Thyroid gland (tissue), 4 donors: ENCODE measurements at regions of chr2 and their contacts with region 1.

Region 1: DNA sequence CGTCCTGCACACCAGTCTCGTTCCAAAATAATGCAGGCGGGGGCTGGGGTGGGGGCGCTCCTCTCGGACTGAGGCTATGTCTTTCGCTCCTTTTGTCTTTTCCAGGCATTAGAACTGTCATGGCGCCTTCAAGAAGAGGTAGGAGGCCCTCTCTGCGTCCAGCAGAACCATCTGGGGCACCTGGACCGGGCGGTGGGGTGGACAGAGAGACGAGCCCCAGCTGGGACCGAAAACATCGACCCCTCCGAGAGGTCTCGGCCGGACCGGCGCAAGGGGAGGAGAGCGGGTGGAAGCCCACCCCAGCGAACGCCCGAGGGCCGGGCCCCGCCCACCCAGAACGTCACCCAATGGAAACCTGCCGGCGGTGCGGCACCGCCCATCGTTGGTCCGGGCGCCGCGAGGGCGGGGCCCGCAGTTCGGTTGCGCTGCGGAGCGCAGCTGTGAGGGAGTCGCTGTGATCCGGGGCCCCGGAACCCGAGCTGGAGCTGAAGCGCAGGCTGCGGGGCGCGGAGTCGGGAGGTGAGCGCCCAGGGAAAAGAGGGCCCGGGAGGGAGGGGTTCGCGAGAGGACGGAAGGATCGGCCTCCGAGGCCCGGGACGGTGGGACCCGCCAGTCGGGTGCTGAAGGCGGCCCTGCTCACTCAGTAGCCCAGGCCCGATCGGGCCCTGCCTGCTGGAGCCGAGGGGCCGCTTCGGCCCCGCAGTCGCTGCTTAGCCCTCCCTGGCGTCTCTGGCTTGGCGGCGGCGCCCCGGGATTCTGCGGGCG is at the start of gene NRBP1:
- DNase-seq: peak; percentile 94 to 96
- H3K4me3 ChIP-seq: peak within 1 kb of the TSS; percentile 51 to 99 (median 97)
- H3K27ac ChIP-seq: peak within 1 kb of the TSS; percentile 97 to 99 (median 98)
- H3K4me1 ChIP-seq: peaks cover 26 to 27% of the 10 kb centered on the region in 2 donors
- H3K27me3 ChIP-seq: no peaks in the 10 kb centered on the region
- CTCF ChIP-seq: no peak
- POLR2A ChIP-seq: peak; percentile 34 to 91
- total RNA-seq, gene NRBP1: 45.2 to 68.6 (median 63.1) TPM

Region 2: DNA sequence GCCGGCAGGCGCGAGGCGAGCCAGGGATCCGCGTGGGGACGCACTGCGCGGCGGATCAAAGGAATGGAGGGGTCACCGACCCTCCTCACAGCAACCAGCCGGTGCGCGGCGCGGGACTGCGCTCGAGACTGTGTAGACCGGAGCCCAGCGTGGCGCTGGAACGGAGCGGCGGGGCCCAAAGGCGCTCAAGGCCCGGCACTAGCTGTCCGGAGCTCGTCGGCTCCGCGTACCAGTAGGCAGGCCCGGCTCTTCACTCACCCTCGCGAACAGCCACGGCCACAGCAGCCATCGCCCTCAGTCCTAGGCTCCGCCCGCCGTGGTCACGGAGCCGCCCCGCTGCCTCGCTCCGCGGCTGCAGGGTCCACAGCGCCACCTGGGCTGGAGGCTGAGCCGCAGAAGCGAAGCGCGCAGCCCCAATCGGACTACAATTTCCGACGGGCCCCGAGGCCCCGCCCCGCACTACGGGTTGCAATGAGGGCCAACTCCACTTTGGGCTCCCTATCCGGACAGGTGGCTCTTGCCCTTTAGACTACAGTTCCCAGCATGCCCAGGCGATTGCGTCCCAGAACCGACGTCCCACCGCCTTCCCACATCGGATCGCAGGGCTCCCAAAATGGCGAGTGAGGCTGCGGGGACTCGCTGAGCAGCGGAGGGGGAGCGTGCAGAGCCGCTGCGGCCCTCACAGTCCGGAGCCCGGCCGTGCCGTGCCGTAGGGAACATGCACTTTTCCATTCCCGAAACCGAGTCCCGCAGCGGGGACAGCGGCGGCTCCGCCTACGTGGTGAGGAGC is 58.2 kb before region 1 on chr2 and contains the starts of genes EIF2B4 and SNX17:
- intact Hi-C with region 1: no loop called
- DNase-seq: peak; percentile 99 to 100
- H3K4me3 ChIP-seq: peak within 1 kb of the TSS; percentile 81 to 94 (median 86)
- H3K27ac ChIP-seq: peak within 1 kb of the TSS; percentile 75 to 83 (median 82)
- H3K4me1 ChIP-seq: peaks cover 18 to 25% of the 10 kb centered on the region in 2 donors
- H3K27me3 ChIP-seq: no peaks in the 10 kb centered on the region
- CTCF ChIP-seq: peak in 5 of 6 experiments; percentile 31 to 88 (median 81)
- POLR2A ChIP-seq: peak; percentile 47 to 83
- total RNA-seq, gene EIF2B4: 34.7 to 44.0 (median 38.6) TPM
- total RNA-seq, gene SNX17: 109 to 148 (median 130) TPM

Region 3: DNA sequence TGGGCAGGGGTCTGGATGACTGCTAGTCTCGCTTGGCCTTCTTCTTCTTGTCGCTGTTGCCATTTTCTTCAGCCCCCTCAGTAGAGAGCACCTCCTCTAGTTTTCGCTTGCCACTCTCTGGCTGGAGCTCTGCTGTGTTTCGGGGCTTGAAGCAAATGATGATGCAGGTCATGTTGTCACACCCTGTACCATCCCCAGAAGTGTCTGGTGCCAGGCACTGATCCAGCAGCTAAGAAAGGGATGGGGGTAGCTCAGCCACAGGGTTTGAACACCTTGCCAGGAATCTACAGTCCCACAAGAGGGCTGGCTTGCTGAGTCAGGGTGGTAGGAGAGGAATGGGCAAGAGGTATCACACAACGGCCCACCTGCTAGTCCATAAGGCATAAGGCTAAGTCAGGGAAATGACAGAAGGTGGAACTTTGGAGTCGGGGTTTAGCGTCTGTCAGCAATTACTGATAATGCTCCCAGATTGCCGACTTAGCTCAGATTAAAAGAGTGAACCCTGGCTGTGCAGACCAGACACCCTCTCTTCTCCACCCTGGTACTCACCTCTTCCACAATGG is 46.7 kb before region 1 on chr2:
- intact Hi-C with region 1: loop called (anchors 2 kb)
- DNase-seq: no peak
- H3K4me3 ChIP-seq: no peak overlapping the region
- H3K27ac ChIP-seq: no peak overlapping the region
- H3K4me1 ChIP-seq: peaks cover 12 to 28% of the 10 kb centered on the region in 2 donors
- H3K27me3 ChIP-seq: no peaks in the 10 kb centered on the region
- CTCF ChIP-seq: no peak
- POLR2A ChIP-seq: no peak

Region 4: GRCh38 chr2:27409321-27410073 is 18.9 kb before region 1 on chr2 and contains the start of gene PPM1G:
- intact Hi-C with region 1: loop called (anchors 2 kb)
- DNase-seq: peak; percentile 96
- H3K4me3 ChIP-seq: peak within 1 kb of the TSS; percentile 96 to 100 (median 97)
- H3K27ac ChIP-seq: peak within 1 kb of the TSS; percentile 54 to 80 (median 58)
- H3K4me1 ChIP-seq: peaks cover 10 to 18% of the 10 kb centered on the region in 2 donors
- H3K27me3 ChIP-seq: no peaks in the 10 kb centered on the region
- CTCF ChIP-seq: peak in 1 of 6 experiments; percentile 10
- POLR2A ChIP-seq: peak in 1 of 2 donors; percentile 86
- total RNA-seq, gene PPM1G: 55.4 to 75.2 (median 59.5) TPM

Region 5: DNA sequence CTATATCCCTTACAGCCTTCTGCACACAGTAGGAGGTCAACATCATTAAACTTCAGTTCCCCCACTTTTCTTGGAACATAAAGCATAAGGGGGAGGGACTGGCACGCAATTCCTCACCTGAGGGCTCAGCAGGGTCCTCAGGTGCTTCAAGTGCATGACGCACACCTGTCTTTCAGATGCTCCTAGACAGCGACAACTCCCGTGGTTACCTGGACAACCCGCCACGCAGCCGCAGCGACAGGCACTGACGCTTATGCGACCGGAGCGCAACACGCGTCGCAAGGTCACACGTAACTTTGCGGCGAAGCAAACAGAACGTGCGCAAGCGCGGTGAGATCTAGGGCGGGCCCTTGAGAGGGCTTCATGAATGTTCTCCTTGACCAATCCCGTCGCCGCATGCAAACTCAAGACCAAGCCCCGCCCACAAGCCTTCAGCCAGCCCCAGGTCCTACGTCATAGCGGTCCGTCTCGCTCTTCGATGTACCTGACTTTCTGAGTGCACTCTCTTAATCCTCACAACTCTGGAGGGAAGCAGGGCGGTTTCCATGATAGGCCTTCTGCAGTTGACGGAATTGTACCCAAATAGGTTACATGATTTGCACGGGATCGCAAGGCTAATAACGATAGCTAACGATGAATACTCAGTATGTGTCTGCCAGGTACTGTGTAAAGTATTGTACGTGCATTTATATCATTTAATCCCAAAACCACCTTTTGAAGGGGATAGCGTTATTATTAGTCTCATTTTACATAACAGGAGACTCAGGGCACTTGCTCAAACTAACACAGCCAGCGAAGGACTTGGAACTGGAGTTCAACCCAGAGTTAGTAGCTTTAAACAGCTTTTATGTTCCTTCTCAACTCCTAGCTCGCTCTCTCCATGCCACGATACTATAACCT is 61.4 kb after region 1 on chr2 and contains the start of gene IFT172:
- intact Hi-C with region 1: loop called (anchors 10 kb)
- DNase-seq: peak; percentile 100
- H3K4me3 ChIP-seq: peak within 1 kb of the TSS in 2 of 3 donors; percentile 22 to 31
- H3K27ac ChIP-seq: peak within 1 kb of the TSS; percentile 63 to 79 (median 78)
- H3K4me1 ChIP-seq: peaks cover 6 to 11% of the 10 kb centered on the region in 2 donors
- H3K27me3 ChIP-seq: no peaks in the 10 kb centered on the region
- CTCF ChIP-seq: no peak
- POLR2A ChIP-seq: peak; percentile 53 to 95
- total RNA-seq, gene IFT172: 30.9 to 56.8 (median 43.7) TPM